ENCODE measurements at regions of chr1 and their contacts with region 1.

Region 1: GRCh38 chr1:203267347-203267846 is 37.9 kb upstream of the BTG2 start:
- DNase-seq: peak; percentile 91
- H3K4me3 Mint-ChIP-seq: peak overlapping the region; percentile 79
- H3K27ac Mint-ChIP-seq: peak overlapping the region; percentile 86
- H3K4me1 Mint-ChIP-seq: peaks cover 32% of the 10 kb centered on the region
- H3K27me3 Mint-ChIP-seq: peaks cover 1% of the 10 kb centered on the region

Region 2: DNA sequence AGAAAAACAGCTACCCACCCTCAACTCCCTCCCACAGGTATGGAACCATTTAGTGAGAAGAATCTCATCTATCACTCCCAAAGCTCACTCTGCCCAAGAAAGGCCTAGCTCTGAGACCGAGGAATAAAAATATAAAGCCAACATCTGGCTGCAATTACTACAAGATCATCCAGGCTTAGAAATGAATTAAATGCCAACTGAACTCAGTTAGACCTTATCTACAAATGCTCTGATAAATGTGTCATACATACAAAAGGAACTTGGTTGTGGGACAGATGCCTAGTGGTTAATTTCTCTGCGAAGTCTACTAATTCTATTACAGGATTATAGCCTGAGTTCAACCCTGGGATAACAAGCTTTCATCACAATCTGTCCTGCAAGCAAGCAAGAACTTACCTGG is 316.0 kb before region 1 on chr1:
- CTCF ChIA-PET with region 1: no interaction called
- POLR2A ChIA-PET with region 1: no interaction called
- DNase-seq: no peak
- H3K4me3 Mint-ChIP-seq: no peak overlapping the region
- H3K27ac Mint-ChIP-seq: no peak overlapping the region
- H3K4me1 Mint-ChIP-seq: peaks cover 48% of the 10 kb centered on the region
- H3K27me3 Mint-ChIP-seq: no peaks in the 10 kb centered on the region

Region 3: GRCh38 chr1:203304919-203305808 is 37.8 kb after region 1 on chr1 and contains the start of gene BTG2:
- CTCF ChIA-PET with region 1: interaction called, 58 read pairs
- POLR2A ChIA-PET with region 1: no interaction called
- DNase-seq: peak; percentile 91
- H3K4me3 Mint-ChIP-seq: peak within 1 kb of the TSS; percentile 96
- H3K27ac Mint-ChIP-seq: peak within 1 kb of the TSS; percentile 96
- H3K4me1 Mint-ChIP-seq: peaks cover 57% of the 10 kb centered on the region
- H3K27me3 Mint-ChIP-seq: no peaks in the 10 kb centered on the region
- total RNA-seq, gene BTG2: 73.6 to 82.3 TPM

Region 4: DNA sequence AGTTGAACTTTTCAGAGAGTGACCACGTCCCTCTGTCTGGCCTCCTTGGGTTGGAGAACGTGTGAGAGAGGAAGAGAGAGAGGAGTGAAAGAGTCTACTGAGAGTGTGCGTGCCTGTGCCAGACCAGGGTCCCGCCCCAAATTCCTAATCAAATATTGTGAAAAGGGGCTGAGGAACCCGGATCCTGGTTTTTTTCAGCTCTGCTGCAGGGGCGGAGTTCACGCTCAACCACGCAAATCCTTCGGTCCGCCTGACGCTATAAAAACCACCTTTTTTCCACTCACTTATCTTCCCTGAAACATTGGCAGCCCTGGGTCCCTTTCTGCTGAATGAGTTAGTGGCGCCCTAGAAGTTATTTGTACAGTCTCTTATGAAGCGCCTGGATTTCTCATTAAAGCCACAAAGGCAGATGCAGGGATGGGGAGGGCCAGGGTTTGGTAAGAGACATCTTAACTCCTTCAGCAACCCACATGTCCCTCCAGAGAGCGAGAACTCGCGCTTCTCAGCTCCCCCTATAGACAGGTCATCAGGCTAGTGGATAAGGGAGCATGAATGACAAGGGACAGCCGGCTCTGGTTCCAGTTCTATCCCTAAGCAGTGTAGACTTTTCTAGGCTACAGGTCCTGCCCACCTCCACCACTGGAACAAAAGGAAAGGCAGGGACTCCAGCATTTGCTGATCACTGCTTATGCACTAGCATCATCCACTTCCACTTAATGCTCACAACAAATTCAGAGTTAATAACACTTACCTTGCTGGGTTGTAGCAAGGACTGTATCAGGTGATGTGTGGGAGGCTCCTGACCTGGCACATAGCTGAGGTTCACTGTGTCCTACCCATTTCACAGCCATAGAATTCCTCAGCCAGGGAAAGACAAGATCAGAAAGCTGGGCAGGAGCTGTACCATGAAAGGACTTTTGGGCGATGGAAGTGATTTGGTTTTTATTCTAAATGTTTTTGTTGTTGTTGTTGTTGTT is 83.9 kb after region 1 on chr1 and contains the start of gene FMOD:
- CTCF ChIA-PET with region 1: interaction called, 299 read pairs
- POLR2A ChIA-PET with region 1: no interaction called
- DNase-seq: no peak
- H3K4me3 Mint-ChIP-seq: no peak within 1 kb of the TSS
- H3K27ac Mint-ChIP-seq: no peak within 1 kb of the TSS
- H3K4me1 Mint-ChIP-seq: no peaks in the 10 kb centered on the region
- H3K27me3 Mint-ChIP-seq: peaks cover 27% of the 10 kb centered on the region
- total RNA-seq, gene FMOD: not detected

Region 5: DNA sequence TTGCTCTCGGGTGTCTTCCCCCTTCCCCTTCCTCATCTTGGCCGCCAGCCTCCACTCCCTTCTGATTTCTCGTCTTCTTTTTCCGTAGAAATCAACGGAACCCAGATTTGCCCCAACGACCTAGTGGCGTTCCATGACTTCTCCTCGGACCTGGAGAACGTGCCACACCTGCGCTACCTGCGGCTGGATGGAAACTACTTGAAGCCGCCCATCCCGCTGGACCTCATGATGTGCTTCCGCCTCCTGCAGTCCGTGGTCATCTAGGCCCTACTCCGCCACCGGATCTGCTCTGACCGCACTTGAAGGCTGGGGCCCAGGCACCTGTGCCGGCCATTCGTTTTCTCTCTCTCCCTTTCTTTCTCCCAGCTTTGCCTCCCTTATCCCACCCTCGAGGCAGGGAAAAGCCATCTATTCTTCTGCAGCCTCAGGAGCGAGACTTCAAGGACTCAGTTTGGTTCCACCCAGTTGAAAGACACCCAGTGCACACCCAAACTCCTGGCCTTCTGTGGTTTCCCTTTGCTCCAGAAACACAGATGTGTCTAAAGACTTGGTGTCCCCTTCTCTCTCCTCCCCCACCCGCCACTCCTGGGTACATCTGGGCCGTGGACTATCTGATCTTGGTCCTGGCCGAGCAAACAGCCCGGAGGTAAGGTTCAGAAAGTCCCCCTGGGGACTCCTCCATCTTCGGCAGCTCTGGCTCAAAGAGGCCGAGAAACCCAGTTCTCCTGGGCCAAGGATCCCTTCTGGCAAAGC is 219.4 kb after region 1 on chr1:
- CTCF ChIA-PET with region 1: interaction called, 64 read pairs
- POLR2A ChIA-PET with region 1: no interaction called
- DNase-seq: no peak
- H3K4me3 Mint-ChIP-seq: peak overlapping the region; percentile 51
- H3K27ac Mint-ChIP-seq: no peak overlapping the region
- H3K4me1 Mint-ChIP-seq: peaks cover 8% of the 10 kb centered on the region
- H3K27me3 Mint-ChIP-seq: no peaks in the 10 kb centered on the region

Region 6: DNA sequence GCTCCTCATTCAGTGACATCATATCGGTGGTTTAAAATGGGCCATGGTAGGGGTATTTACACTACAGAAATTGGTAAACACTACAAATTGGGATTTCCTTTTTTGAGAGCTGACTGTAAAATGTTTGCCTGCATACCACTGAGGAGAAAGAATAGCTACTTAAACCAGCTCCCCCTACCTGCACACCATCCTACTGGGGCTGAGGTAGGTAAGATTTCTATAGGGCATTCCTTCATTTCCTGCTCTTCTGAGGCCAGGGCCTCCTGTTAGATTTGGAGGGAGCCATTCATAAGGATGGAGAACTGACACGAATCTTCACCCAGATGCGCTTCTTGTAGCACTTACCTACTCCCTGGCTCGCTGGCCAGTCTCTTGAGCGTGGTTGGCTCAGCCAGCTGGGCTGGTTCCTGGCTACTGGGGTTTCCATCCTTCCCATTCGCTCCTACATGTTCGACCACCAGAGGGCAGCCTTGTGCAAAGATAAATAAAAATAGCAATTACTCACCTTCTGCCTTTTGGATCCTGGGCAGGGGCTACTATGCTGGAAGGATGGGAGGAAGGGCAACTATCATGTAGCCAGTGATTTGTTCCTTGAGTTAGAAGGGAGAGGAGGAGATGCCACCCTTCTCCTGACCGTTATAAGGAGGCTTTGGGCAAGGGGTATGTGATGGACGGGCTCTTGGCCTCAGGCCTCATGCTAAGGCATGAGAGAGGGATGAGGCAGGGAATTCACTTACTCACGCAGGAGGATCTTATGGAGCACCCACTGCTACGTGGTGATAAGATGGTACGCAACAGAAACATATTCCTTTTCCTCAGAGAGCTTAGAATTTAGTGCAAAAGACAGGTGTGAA is 237.2 kb after region 1 on chr1:
- CTCF ChIA-PET with region 1: interaction called, 12 read pairs
- POLR2A ChIA-PET with region 1: no interaction called
- DNase-seq: peak; percentile 79
- H3K4me3 Mint-ChIP-seq: no peak overlapping the region
- H3K27ac Mint-ChIP-seq: no peak overlapping the region
- H3K4me1 Mint-ChIP-seq: no peaks in the 10 kb centered on the region
- H3K27me3 Mint-ChIP-seq: peaks cover 3% of the 10 kb centered on the region